Astrocyte of the cerebellum (primary cell): ENCODE measurements at regions of chr1 and their contacts with region 1.

Region 1: GRCh38 chr1:25435397-25436108 is 4.9 kb downstream of the MACO1 start:
- DNase-seq: no peak
- H3K4me3 ChIP-seq: no peak overlapping the region
- CTCF ChIP-seq: no peak

Region 2: GRCh38 chr1:25494952-25495351 is 59.4 kb after region 1 on chr1:
- in situ Hi-C with region 1: loop called (anchors 5 kb)
- DNase-seq: no peak
- H3K4me3 ChIP-seq: no peak overlapping the region
- CTCF ChIP-seq: no peak